Mammary epithelial cell (primary cell): ENCODE measurements at regions of chr11 and their contacts with region 1.

Region 1: DNA sequence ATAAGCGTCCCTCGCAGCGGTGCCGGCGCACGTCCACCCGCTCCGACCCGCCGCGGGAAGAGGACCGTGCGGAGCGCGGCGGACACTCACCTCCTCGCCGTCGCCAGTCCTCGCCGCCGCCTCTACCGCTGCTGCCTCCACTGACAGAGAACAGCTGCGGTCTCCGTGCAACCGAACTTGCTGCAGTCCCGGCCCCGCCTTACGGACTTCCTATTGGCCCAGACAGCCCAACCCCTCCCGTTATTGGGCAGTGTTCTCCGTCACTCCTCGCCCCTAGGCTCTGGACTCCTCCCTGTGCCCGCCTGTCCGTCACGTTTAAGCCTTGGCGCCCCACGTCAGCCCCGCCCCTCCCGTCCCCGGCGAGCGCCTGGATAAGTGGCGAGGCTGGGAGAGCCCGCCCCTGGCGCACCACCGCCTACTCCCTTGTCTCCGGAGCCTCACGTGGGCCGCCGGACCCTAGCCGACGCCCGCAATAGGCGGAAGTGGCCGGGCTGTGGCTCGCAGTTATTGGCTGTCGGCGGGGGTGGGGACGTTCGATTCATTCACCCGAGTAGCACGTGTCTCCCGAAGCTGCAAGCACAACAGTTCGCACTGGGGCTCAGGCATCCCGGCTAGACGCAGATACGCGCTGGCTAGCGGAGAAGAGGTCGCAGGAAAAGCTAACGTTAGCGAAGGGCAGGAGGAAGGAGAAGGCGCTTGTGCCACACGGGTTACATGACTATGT is at the start of gene PC:
- DNase-seq: peak; percentile 100
- H3K4me3 ChIP-seq: peak within 1 kb of the TSS; percentile 59 to 84 (median 68)
- H3K27ac ChIP-seq: peak within 1 kb of the TSS; percentile 29
- H3K4me1 ChIP-seq: peaks cover 24% of the 10 kb centered on the region
- H3K27me3 ChIP-seq: no peaks in the 10 kb centered on the region
- CTCF ChIP-seq: no peak
- total RNA-seq, gene PC: 52.0 to 67.0 TPM

Region 2: GRCh38 chr11:66883016-66883968 is 75.1 kb before region 1 on chr11:
- CTCF ChIA-PET with region 1: no interaction called
- dilution Hi-C with region 1: loop called (anchors 5 kb)
- in situ Hi-C with region 1: no loop called
- intact Hi-C with region 1: loop called (anchors 2 kb)
- DNase-seq: peak; percentile 60
- H3K4me3 ChIP-seq: no peak overlapping the region
- H3K27ac ChIP-seq: no peak overlapping the region
- H3K4me1 ChIP-seq: peaks cover 38% of the 10 kb centered on the region
- H3K27me3 ChIP-seq: no peaks in the 10 kb centered on the region
- CTCF ChIP-seq: peak; percentile 62 to 76

Region 3: GRCh38 chr11:66891851-66892660 is 66.3 kb before region 1 on chr11:
- CTCF ChIA-PET with region 1: no interaction called
- dilution Hi-C with region 1: loop called (anchors 5 kb)
- in situ Hi-C with region 1: no loop called
- intact Hi-C with region 1: loop called (anchors 1 kb)
- DNase-seq: peak; percentile 98
- H3K4me3 ChIP-seq: no peak overlapping the region
- H3K27ac ChIP-seq: peak overlapping the region; percentile 9
- H3K4me1 ChIP-seq: peaks cover 18% of the 10 kb centered on the region
- H3K27me3 ChIP-seq: no peaks in the 10 kb centered on the region
- CTCF ChIP-seq: peak in 1 of 2 donors; percentile 10

Region 4: GRCh38 chr11:66906061-66906735 is 52.2 kb before region 1 on chr11:
- CTCF ChIA-PET with region 1: no interaction called
- dilution Hi-C with region 1: no loop called
- in situ Hi-C with region 1: no loop called
- intact Hi-C with region 1: no loop called
- DNase-seq: peak; percentile 93
- H3K4me3 ChIP-seq: peak overlapping the region; percentile 38 to 68 (median 44)
- H3K27ac ChIP-seq: peak overlapping the region; percentile 81
- H3K4me1 ChIP-seq: peaks cover 43% of the 10 kb centered on the region
- H3K27me3 ChIP-seq: no peaks in the 10 kb centered on the region
- CTCF ChIP-seq: no peak

Region 5: DNA sequence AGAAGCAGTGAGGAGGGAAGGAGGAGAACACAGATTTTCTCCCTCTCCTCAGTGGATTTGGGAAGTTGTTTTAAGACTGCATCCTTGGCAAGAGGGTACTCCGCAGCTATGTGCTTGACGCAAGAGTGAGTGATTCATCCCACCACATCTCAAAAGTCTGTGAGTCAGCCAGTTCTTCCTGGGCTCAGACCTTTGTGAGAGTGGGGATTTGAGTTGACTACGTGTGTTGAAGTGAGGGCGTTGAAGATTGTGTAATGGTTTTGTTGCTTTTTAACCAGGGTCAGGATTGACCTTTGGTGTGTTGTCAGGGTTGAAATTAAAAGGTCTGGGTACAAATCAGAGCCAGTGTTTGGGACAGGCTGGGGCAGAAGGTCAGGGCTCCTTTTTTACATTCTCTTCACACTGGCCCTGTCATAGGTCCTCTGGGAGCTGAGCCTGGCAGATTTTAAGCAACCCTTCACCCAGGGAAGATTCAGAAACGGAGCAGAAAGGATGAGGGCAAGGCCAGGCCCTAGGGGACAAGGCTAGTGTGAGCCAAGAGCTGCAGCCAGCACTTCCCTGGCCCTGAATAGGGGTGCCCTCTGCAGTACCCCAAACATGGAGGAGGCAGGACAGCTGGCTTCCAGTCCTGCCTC is 12.5 kb after region 1 on chr11:
- CTCF ChIA-PET with region 1: no interaction called
- dilution Hi-C with region 1: no loop called
- in situ Hi-C with region 1: no loop called
- intact Hi-C with region 1: loop called (anchors 1 kb)
- DNase-seq: peak; percentile 99
- H3K4me3 ChIP-seq: no peak overlapping the region
- H3K27ac ChIP-seq: peak overlapping the region; percentile 96
- H3K4me1 ChIP-seq: peaks cover 51% of the 10 kb centered on the region
- H3K27me3 ChIP-seq: no peaks in the 10 kb centered on the region
- CTCF ChIP-seq: no peak

Region 6: DNA sequence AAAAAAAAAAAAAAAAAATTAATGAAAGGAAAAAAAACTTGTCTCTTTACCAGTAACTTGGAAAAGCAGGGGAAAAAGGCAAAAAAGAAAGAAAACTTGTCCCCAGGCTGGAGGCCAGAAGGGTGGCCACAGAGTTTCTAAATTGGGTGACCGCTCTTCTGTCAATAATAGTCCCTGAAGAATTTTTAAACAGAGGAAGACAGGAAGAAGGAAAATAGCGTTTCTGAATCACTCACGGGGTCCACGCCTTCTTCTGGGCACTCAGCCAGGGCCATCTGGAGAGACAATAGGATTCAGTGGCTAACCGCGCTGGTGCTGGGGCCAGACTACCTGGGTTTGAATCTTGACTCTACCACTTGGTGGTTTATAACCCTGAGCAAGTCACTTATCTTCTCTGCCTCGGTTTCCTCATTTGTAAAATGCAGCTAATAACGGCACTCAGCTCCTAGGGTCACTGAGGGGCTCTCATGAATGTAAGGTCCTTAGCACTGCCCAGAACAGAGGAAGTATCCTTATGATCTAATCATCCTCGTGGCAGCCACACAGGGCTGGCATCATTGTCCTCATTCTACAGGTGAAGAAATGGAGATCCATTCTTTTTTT is 23.7 kb after region 1 on chr11:
- CTCF ChIA-PET with region 1: interaction called, 4 read pairs
- dilution Hi-C with region 1: no loop called
- in situ Hi-C with region 1: no loop called
- intact Hi-C with region 1: loop called (anchors 2 kb)
- DNase-seq: peak; percentile 89
- H3K4me3 ChIP-seq: no peak overlapping the region
- H3K27ac ChIP-seq: no peak overlapping the region
- H3K4me1 ChIP-seq: peaks cover 41% of the 10 kb centered on the region
- H3K27me3 ChIP-seq: no peaks in the 10 kb centered on the region
- CTCF ChIP-seq: no peak

Region 7: DNA sequence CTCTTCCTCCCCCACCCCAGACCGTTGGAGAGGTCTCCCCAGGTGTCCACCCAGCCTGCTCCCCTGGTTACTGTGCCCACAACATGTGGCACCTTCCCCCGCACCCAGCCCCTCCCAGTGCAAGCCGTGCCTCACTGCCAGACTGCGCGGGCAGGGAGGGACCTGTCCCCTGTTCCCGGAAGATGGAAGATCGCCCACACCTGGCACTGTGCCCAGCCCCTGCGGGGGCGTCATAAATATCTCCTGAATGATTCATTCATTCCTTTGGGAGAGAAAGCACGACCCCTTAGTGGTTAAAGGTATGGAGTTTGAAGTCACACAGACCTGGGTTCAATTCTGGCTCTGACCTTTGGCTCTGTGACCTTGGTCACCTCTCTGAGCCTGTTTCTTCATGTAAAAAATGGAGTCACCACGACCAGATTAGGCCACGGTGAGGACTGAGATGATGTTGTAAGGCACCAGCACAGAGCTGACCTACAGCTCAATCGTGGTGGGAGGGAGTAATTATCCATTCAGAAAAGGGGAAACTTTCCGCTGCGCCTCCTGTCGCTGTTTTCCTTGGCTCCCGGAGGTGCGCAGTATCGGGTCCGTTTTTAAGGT is 64.0 kb after region 1 on chr11:
- CTCF ChIA-PET with region 1: no interaction called
- dilution Hi-C with region 1: no loop called
- in situ Hi-C with region 1: no loop called
- intact Hi-C with region 1: loop called (anchors 1 kb)
- DNase-seq: peak; percentile 79
- H3K4me3 ChIP-seq: peak overlapping the region in 1 of 3 experiments; percentile 44
- H3K27ac ChIP-seq: peak overlapping the region; percentile 37
- H3K4me1 ChIP-seq: peaks cover 41% of the 10 kb centered on the region
- H3K27me3 ChIP-seq: no peaks in the 10 kb centered on the region
- CTCF ChIP-seq: no peak

Region 8: DNA sequence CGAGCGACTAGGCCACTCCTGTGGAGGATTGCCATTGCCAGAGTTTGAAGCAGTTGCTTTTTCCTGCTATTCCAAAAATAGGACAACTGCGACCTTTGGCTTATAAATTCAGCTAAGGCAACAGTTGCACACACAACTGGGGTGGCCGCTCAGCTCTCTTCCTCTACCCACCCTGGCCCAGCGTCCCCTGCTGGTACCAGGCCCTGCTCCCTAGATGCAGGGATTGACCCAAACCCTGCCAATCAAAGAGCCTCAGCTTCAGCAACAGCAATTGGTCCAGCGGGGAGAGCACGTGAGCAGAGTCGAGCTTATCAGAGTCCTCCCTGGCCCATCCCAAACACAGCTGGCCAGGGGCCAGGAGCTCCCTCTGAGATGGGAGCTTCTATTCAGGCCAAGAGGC is 586.9 kb after region 1 on chr11:
- CTCF ChIA-PET with region 1: no interaction called
- dilution Hi-C with region 1: no loop called
- in situ Hi-C with region 1: no loop called
- intact Hi-C with region 1: no loop called
- DNase-seq: no peak
- H3K4me3 ChIP-seq: no peak overlapping the region
- H3K27ac ChIP-seq: no peak overlapping the region
- H3K4me1 ChIP-seq: no peaks in the 10 kb centered on the region
- H3K27me3 ChIP-seq: no peaks in the 10 kb centered on the region
- CTCF ChIP-seq: no peak